MCF 10A (cell line): ENCODE measurements at regions of chr22 and their contacts with region 1.

Region 1: DNA sequence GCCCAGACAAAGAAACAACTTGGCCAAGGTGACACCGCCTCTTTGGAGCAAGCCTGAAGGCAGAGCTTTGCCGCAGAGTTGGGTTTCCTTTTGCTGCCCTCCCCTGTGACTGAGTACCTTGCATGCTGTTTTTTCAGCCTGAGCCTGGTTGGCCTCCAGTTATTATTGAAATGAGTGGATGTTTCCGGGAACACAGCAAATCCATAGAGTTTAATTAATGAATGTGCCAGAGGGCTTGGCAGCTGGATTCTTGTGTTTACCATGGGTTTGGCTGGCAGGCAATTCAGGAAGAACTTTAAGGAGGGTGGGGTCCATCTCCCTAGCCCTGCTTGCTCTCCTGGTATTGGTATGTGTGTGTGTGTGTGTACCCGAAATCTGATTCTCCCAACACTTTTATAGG is 65.6 kb upstream of the CRYBB3 start:
- DNase-seq: peak; percentile 82
- H3K4me3 Mint-ChIP-seq: peak overlapping the region; percentile 44
- H3K27ac Mint-ChIP-seq: peak overlapping the region; percentile 88
- H3K4me1 Mint-ChIP-seq: peaks cover 29% of the 10 kb centered on the region
- H3K27me3 Mint-ChIP-seq: no peaks in the 10 kb centered on the region
- CTCF ChIP-seq: no peak

Region 2: GRCh38 chr22:25027959-25028840 is 105.8 kb before region 1 on chr22:
- CTCF ChIA-PET with region 1: no interaction called
- POLR2A ChIA-PET with region 1: no interaction called
- intact Hi-C with region 1: no loop called
- DNase-seq: no peak
- H3K4me3 Mint-ChIP-seq: no peak overlapping the region
- H3K27ac Mint-ChIP-seq: peak overlapping the region; percentile 79
- H3K4me1 Mint-ChIP-seq: peaks cover 28% of the 10 kb centered on the region
- H3K27me3 Mint-ChIP-seq: no peaks in the 10 kb centered on the region
- CTCF ChIP-seq: peak; percentile 28

Region 3: GRCh38 chr22:25048659-25049647 is 85.1 kb before region 1 on chr22:
- CTCF ChIA-PET with region 1: no interaction called
- POLR2A ChIA-PET with region 1: no interaction called
- intact Hi-C with region 1: no loop called
- DNase-seq: peak; percentile 80
- H3K4me3 Mint-ChIP-seq: no peak overlapping the region
- H3K27ac Mint-ChIP-seq: no peak overlapping the region
- H3K4me1 Mint-ChIP-seq: peaks cover 7% of the 10 kb centered on the region
- H3K27me3 Mint-ChIP-seq: no peaks in the 10 kb centered on the region
- CTCF ChIP-seq: peak; percentile 96

Region 4: DNA sequence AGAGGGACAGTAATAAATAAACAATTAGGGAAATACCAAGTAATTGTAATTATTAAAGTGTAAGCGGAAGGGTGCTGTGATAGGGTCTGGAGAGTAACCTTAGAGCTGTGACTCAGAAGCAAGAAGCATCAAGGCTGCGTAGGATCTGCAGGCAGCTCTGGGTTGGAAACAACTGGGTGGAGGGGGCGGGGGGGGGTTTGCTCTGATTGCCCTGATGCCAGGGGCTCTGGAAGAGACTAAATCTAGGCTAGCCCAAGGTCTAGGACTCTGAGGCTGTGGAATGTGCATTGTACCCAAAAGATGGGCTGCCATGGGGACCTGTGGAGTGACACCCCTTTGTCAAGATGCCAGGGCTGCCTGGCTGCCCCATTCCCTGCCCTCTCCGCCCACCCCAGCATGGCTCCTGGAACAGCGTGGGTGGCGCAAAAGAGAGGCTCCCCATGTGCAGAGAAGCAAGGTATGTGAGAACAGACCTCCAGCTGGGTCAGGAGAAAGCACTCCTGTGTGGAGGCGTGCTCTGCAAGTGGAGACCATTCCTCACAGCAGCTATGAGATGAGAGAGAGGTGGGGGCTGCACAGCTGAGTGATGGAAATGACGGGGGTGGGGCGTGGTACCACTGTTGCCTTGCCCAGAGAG is 35.5 kb before region 1 on chr22:
- CTCF ChIA-PET with region 1: no interaction called
- POLR2A ChIA-PET with region 1: no interaction called
- intact Hi-C with region 1: no loop called
- DNase-seq: no peak
- H3K4me3 Mint-ChIP-seq: no peak overlapping the region
- H3K27ac Mint-ChIP-seq: no peak overlapping the region
- H3K4me1 Mint-ChIP-seq: peaks cover under 1% of the 10 kb centered on the region
- H3K27me3 Mint-ChIP-seq: no peaks in the 10 kb centered on the region
- CTCF ChIP-seq: no peak

Region 5: DNA sequence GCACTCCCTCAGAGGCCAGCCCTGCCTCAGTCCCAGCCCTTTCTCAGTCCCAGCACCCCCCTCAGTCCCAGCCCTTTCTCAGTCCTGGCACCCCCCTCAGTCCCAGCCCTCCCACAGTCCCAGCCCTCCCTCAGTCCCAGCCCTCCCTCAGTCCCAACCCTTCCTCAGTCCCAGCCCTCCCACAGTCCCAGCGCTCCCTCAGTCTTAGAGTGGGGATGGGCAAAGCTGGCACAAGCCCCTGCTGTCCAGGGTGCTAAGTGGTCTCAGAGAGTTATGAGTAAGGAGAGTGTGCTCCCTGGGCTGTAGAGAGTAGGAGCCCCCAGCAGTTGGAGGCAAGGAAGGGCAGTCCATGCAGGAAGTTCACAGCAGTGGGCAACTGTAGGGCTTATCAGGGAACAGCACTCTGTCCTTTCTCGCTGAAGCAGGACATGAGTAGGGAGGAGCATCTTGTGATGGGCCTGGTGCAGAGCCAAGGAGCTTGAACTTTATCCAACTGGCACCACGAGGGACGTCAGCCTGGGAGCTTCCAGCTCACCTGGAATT is 14.2 kb after region 1 on chr22:
- CTCF ChIA-PET with region 1: interaction called, 6 read pairs
- POLR2A ChIA-PET with region 1: interaction called, 13 read pairs
- intact Hi-C with region 1: no loop called
- DNase-seq: peak; percentile 43
- H3K4me3 Mint-ChIP-seq: peak overlapping the region; percentile 2
- H3K27ac Mint-ChIP-seq: peak overlapping the region; percentile 91
- H3K4me1 Mint-ChIP-seq: peaks cover 21% of the 10 kb centered on the region
- H3K27me3 Mint-ChIP-seq: no peaks in the 10 kb centered on the region
- CTCF ChIP-seq: no peak

Region 6: DNA sequence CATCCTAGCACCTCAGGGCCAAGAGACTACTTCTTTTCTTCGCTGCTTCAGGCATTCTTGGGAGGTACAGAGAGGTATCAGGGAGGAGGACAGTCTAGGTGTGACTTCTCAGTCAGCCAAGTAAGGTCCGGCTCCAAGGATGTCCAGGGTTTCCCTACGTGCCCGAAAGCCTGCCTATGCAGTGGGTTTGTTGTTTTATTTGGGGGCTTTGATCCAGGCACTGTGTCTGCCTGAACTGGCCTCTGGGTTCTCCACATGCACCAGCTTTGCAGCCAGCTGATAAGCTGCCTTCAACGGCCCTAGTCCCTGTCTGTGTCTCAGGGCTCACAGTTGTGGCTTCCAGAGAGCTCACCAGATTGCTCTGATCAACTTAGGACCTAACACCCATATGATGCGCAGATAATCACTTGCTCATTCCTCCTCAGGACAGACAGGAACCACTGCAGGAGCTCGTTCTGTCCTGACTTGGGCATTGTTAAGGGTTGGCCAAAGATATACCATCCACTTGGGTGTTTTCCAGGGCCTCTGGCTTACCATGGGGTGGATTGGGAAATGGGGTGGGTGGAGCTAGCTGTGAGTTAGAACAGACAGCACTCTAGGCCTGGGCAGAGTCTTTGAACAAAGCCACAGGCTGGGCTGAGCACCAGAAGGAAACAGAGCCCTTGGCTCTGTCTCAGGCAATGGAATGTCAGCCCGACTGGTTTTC is 20.1 kb after region 1 on chr22:
- CTCF ChIA-PET with region 1: interaction called, 6 read pairs
- POLR2A ChIA-PET with region 1: interaction called, 22 read pairs
- intact Hi-C with region 1: no loop called
- DNase-seq: peak; percentile 97
- H3K4me3 Mint-ChIP-seq: no peak overlapping the region
- H3K27ac Mint-ChIP-seq: peak overlapping the region; percentile 8
- H3K4me1 Mint-ChIP-seq: peaks cover 45% of the 10 kb centered on the region
- H3K27me3 Mint-ChIP-seq: no peaks in the 10 kb centered on the region
- CTCF ChIP-seq: no peak

Region 7: DNA sequence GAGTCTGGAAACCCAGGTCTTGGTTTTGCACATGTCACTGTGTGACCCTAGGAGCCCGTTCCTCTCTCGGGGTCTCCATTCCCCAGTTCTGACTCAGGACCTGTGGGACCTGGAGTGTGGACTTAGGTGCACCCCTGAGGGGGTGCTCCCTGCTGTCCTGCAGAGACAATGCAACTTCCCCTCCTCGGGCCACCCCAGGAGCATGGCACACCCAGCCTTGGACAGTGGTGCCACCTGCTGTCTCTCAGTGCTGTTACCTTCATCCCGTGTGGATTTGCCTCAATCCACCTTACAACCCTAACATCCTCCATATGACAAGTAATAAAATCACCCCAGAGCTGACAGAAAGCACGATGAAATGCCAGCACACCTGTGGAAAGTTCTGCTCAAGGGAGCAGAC is 38.1 kb after region 1 on chr22:
- CTCF ChIA-PET with region 1: interaction called, 4 read pairs
- POLR2A ChIA-PET with region 1: interaction called, 10 read pairs
- intact Hi-C with region 1: no loop called
- DNase-seq: peak; percentile 39
- H3K4me3 Mint-ChIP-seq: no peak overlapping the region
- H3K27ac Mint-ChIP-seq: peak overlapping the region; percentile 61
- H3K4me1 Mint-ChIP-seq: peaks cover 31% of the 10 kb centered on the region
- H3K27me3 Mint-ChIP-seq: no peaks in the 10 kb centered on the region
- CTCF ChIP-seq: no peak

Region 8: DNA sequence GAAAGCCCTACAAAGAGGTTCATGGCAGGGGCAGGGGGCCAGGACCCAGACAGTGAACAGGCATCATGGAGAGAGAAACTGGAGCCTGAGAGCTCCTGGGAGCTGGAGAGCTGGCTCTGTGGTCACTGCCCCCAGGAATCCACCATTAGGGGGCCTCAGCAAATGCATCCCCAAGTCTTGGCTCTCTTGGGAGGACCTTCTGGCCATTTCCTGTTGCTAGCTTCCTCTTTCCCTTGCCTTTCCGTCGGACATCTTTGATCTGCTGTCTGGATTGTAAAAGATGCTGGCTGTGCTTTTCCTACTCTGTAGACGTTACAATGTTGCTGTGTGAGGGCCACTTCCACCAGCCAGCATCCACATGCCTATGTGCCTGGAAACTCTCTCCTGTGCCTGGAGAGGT is 78.3 kb after region 1 on chr22:
- CTCF ChIA-PET with region 1: no interaction called
- POLR2A ChIA-PET with region 1: no interaction called
- intact Hi-C with region 1: no loop called
- DNase-seq: no peak
- H3K4me3 Mint-ChIP-seq: no peak overlapping the region
- H3K27ac Mint-ChIP-seq: no peak overlapping the region
- H3K4me1 Mint-ChIP-seq: no peaks in the 10 kb centered on the region
- H3K27me3 Mint-ChIP-seq: no peaks in the 10 kb centered on the region
- CTCF ChIP-seq: no peak